Motor neuron (in vitro differentiated cells): ENCODE measurements at regions of chr12 and their contacts with region 1.

Region 1: DNA sequence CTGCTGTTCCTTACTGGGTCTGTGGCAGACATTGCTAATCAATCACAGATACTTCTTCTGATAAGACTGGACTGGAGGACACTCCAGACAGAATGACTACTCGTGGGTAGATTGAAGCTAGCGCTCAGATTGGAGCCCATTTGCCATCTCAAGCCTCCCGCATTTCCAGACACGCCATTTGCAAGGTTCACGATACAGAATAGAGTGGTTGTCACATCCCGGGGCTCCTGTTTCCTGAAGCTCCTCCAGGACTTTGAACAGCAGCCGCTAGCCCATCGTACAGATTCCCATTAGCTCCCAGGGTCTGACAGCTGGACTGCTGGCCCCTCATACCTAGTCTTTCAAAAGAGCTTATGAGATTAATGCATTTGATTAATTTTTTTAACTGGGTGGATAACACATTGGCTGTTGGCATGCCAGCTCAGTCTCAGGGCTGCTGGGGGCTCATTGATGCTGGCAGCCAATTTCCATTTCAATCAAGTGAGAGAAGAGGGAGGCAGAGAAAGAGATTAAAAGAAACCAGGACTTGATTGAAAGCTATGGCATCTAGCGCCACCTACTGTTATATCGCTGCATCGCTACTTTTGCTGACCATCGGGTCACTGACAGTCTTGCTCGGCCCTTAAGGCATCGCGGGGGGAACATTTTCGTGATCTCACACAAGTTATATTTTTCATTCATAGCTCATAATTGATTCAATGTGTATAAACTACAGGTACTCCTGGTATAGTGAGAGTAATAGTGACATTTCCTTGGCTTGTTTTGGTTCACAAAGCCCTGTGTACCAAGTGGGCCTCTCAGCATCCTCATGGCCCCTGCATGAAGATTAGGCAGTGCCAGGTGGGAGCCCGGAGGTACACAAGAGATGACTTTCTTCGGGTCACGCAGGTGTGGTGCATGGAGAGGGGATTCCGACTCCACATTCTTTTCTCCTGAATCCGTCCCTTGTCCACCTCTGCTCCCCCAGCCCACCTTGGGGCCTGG is 78.6 kb downstream of the CCDC60 start:
- ATAC-seq: peak; percentile 82 to 94 (median 91)
- H3K4me3 ChIP-seq: peak overlapping the region in 2 of 5 donors; percentile 0 to 11
- H3K27ac ChIP-seq: no peak overlapping the region
- H3K4me1 ChIP-seq: peaks cover 3 to 4% of the 10 kb centered on the region in 2 donors

Region 2: DNA sequence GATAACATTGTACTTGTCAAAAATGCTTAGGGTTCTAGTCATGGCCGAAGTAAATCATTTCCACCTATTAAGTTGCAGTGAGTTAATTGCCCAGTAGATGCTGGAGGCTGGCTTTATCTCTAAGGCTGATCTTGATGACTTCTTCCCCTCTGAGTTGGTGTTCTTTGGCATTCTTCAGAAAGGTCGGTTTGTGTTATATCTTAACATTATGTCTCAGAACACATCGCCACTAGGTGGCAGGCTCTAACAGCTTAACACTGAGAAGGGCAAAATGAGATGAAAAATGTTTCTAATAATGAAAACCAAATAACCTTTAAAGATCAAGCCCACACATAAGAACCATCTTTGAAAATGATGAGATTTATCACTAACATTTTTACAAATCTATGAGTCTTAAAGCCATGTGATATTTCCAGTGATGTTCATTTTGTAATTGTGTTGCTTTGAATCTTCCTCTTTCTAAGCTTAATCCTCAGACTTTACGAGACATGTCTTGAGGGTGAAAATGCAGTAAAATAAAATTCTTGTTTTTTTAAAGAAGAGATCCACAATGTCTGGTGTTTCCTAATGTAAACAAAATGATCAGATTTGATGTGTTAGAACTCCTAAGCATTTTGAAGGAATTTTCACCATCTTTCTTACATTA is 1008.1 kb before region 1 on chr12:
- in situ Hi-C with region 1: loop called in 2 of 9 experiments (anchors 25 kb)
- ATAC-seq: peak in 7 of 8 experiments; percentile 46 to 75 (median 53)
- H3K4me3 ChIP-seq: no peak overlapping the region
- H3K27ac ChIP-seq: no peak overlapping the region
- H3K4me1 ChIP-seq: peaks cover 0 to 2% of the 10 kb centered on the region in 2 donors

Region 3: DNA sequence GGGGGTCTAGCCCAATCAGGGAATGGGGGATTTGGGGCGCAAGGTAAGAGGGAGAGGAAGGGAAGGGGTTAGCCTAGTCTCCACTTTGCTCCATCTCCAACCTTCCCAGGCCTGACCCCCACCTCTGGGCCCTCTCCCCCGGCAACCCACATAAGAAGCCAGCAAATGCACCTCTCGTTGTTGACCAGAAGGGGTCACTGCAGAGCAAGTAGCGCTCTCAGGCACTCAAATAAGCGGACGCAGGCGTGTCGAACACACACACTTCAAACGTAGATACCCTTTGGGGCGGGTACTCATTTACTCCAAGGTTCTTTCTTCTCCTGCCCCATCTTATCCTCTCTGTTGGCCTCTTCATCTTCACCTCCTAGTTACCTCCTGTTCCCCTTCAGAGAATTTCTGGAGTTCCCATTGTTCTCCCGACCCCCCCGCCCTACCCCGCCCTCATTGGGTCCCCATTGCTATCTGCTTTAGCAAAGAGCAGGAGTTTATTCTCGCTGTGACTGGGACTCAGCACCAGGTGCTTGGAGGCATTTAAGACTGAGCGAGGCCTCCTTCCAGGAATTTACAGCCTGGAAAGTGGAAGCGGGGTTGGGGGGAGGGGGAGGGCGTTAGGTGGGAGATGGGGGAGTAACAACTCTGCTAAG is 433.2 kb before region 1 on chr12:
- in situ Hi-C with region 1: loop called in 2 of 9 experiments (anchors 25 kb)
- ATAC-seq: peak; percentile 7 to 75 (median 18)
- H3K4me3 ChIP-seq: peak overlapping the region; percentile 56 to 91 (median 71)
- H3K27ac ChIP-seq: peak overlapping the region; percentile 82 to 88
- H3K4me1 ChIP-seq: no peaks in the 10 kb centered on the region

Region 4: DNA sequence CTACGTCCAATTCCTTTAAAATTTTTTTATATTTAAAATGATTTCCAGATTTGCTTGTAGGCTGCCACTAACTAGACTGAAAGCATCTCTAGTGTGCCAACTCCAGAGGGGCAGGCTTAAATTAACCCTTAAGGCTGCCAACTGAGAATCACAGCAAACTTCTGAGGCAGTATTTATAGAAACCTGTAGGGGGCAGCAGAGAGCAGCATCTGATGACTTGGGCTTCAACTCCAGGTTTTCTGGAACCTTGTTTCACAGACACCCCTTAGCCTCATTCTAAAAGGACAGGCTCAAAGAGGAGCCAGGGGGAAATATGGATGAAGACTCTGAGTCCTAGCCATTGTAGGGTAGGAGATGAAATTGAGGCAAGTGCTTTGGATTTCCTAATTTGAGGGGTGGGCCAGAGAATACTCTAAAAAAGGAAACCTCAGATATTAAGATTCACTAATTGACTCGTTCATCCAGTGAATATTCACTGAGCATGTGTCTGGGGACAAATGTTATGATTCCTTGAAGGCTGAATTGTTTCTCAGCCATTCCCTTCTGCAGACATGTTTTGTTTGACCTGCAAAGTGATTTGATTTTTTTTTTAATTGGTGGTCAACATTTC is 297.7 kb before region 1 on chr12:
- in situ Hi-C with region 1: loop called in 4 of 9 experiments (anchors 10 to 25 kb)
- ATAC-seq: peak in 5 of 8 experiments; percentile 16 to 57 (median 35)
- H3K4me3 ChIP-seq: no peak overlapping the region
- H3K27ac ChIP-seq: no peak overlapping the region
- H3K4me1 ChIP-seq: no peaks in the 10 kb centered on the region

Region 5: GRCh38 chr12:119147847-119148448 is 265.2 kb before region 1 on chr12:
- in situ Hi-C with region 1: loop called in 1 of 9 experiments (anchors 25 kb)
- ATAC-seq: peak in 3 of 8 experiments; percentile 63 to 70 (median 68)
- H3K4me3 ChIP-seq: no peak overlapping the region
- H3K27ac ChIP-seq: no peak overlapping the region
- H3K4me1 ChIP-seq: peaks cover 0 to 7% of the 10 kb centered on the region in 2 donors

Region 6: GRCh38 chr12:119176267-119176849 is 236.7 kb before region 1 on chr12:
- in situ Hi-C with region 1: loop called in 1 of 9 experiments (anchors 25 kb)
- ATAC-seq: peak; percentile 47 to 77 (median 65)
- H3K4me3 ChIP-seq: no peak overlapping the region
- H3K27ac ChIP-seq: peak overlapping the region; percentile 24 to 73
- H3K4me1 ChIP-seq: peaks cover 43% of the 10 kb centered on the region in 2 donors